Common myeloid progenitor, CD34-positive (primary cell): ENCODE measurements at regions of chr3 and their contacts with region 1.

Region 1: GRCh38 chr3:132730891-132731580 is 8.8 kb upstream of the NPHP3 start:
- DNase-seq: peak; percentile 49 to 66 (median 52)
- H3K4me3 ChIP-seq: no peak overlapping the region
- H3K27ac ChIP-seq: no peak overlapping the region
- H3K4me1 ChIP-seq: no peaks in the 10 kb centered on the region
- H3K27me3 ChIP-seq: peaks cover 0 to 2% (median 0%) of the 10 kb centered on the region in 5 experiments

Region 2: GRCh38 chr3:133368371-133369067 is 637.5 kb after region 1 on chr3:
- CTCF ChIA-PET with region 1: interaction called, 14 read pairs
- POLR2A ChIA-PET with region 1: no interaction called
- DNase-seq: no peak
- H3K4me3 ChIP-seq: no peak overlapping the region
- H3K27ac ChIP-seq: no peak overlapping the region
- H3K4me1 ChIP-seq: peaks cover 0 to 5% (median 2%) of the 10 kb centered on the region in 4 experiments
- H3K27me3 ChIP-seq: peaks cover 0 to 8% (median 0%) of the 10 kb centered on the region in 5 experiments

Region 3: GRCh38 chr3:133426721-133427120 is 695.7 kb after region 1 on chr3:
- CTCF ChIA-PET with region 1: interaction called, 11 read pairs
- POLR2A ChIA-PET with region 1: no interaction called
- DNase-seq: no peak
- H3K4me3 ChIP-seq: no peak overlapping the region
- H3K27ac ChIP-seq: no peak overlapping the region
- H3K4me1 ChIP-seq: peaks cover 0 to 5% (median 0%) of the 10 kb centered on the region in 4 experiments
- H3K27me3 ChIP-seq: peaks cover 0 to 5% (median 0%) of the 10 kb centered on the region in 5 experiments